ENCODE measurements at regions of chr17 and their contacts with region 1.

Region 1: GRCh38 chr17:34542700-34543336 is 36.6 kb upstream of the TMEM132E start:
- DNase-seq: peak in 1 of 2 donors; percentile 18
- ATAC-seq: peak in 1 of 8 donors; percentile 55
- H3K4me3 ChIP-seq: no peak overlapping the region
- H3K27ac ChIP-seq: no peak overlapping the region
- H3K4me1 ChIP-seq: no peaks in the 10 kb centered on the region
- H3K27me3 ChIP-seq: peaks cover 0 to 75% (median 50%) of the 10 kb centered on the region in 7 donors
- CTCF ChIP-seq: peak; percentile 60 to 87 (median 82)

Region 2: DNA sequence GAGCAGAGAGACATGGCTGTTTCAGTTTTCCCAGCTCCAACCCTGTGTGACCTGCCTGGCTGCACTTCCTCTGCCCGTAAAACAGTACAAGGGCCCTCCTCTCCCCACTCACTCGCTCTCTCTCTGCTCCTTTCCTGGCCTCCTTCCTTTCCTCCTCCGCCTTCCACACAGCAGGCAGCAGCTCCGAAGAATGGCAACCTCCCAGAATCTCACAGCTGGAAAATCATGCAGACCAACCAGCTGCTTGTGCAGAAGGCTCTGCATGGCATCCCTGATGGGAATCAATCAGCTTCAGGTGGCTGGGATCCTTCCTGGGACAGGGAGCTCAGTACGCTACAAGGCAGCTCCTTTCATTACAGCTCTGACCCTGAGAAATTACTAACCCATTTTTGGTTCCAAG is 63.9 kb after region 1 on chr17:
- intact Hi-C with region 1: loop called in 1 of 10 experiments (anchors 10 kb)
- DNase-seq: peak in 1 of 2 donors; percentile 8
- ATAC-seq: peak in 1 of 8 donors; percentile 22
- H3K4me3 ChIP-seq: no peak overlapping the region
- H3K27ac ChIP-seq: no peak overlapping the region
- H3K4me1 ChIP-seq: no peaks in the 10 kb centered on the region
- H3K27me3 ChIP-seq: peaks cover 0 to 71% (median 47%) of the 10 kb centered on the region in 7 donors
- CTCF ChIP-seq: no peak

Region 3: DNA sequence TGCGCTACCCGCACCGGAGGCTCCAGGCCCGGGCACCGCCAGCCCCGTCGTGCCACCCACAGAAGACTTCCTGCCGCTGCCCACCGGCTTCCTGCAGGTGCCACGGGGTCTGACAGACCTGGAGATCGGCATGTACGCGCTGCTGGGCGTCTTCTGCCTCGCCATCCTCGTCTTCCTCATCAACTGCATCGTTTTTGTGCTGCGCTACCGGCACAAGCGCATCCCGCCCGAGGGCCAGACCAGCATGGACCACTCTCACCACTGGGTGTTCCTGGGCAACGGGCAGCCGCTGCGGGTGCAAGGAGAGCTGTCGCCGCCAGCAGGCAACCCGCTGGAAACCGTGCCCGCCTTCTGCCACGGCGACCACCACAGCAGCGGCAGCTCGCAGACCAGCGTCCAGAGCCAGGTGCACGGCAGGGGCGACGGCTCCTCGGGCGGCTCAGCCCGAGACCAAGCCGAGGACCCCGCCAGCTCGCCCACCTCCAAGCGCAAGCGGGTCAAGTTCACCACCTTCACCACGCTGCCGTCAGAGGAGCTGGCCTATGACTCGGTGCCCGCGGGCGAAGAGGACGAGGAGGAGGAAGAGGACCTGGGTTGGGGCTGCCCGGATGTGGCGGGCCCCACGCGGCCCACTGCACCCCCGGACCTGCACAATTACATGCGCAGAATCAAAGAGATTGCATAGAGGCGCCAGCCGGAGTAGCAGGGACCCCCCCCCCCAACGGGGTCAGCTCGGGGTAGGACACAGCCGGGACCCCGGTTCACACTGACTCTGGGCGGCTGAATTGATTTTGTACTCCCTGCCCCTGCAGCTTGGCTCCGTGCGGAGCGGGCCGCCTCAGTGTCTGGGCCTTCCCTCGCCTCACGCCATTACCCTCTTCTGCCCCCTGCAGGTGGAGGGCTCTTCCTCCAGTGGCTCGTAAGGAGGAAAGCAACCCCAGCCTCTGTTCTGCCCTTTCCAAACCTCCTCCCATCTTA is 95.0 kb after region 1 on chr17:
- intact Hi-C with region 1: loop called in 9 of 10 experiments (anchors 2 to 5 kb)
- DNase-seq: peak; percentile 73 to 75
- ATAC-seq: peak; percentile 87 to 97 (median 92)
- H3K4me3 ChIP-seq: peak overlapping the region in 9 of 10 donors; percentile 27 to 53 (median 49)
- H3K27ac ChIP-seq: no peak overlapping the region
- H3K4me1 ChIP-seq: peaks cover 0 to 11% (median 7%) of the 10 kb centered on the region in 9 donors
- H3K27me3 ChIP-seq: peaks cover 10 to 90% (median 75%) of the 10 kb centered on the region in 7 donors
- CTCF ChIP-seq: peak; percentile 67 to 89 (median 85)

Region 4: GRCh38 chr17:34892461-34893249 is 349.8 kb after region 1 on chr17:
- intact Hi-C with region 1: loop called in 6 of 10 experiments (anchors 5 to 10 kb)
- DNase-seq: no peak
- ATAC-seq: peak in 3 of 8 donors; percentile 44 to 64 (median 51)
- H3K4me3 ChIP-seq: no peak overlapping the region
- H3K27ac ChIP-seq: no peak overlapping the region
- H3K4me1 ChIP-seq: no peaks in the 10 kb centered on the region
- H3K27me3 ChIP-seq: peaks cover 7 to 84% (median 58%) of the 10 kb centered on the region in 7 donors
- CTCF ChIP-seq: peak in 7 of 9 donors; percentile 40 to 58 (median 49)

Measured in heart right ventricle (tissue), 16 donors.